ENCODE measurements at regions of chr17 and their contacts with region 1.

Region 1: GRCh38 chr17:15398736-15399331 is 57.4 kb upstream of the TEKT3 start:
- DNase-seq: peak; percentile 5
- H3K4me3 ChIP-seq: no peak overlapping the region
- H3K27ac ChIP-seq: peak overlapping the region; percentile 9
- H3K4me1 ChIP-seq: peaks cover 16% of the 10 kb centered on the region
- H3K27me3 ChIP-seq: no peaks in the 10 kb centered on the region
- CTCF ChIP-seq: no peak
- POLR2A ChIP-seq: no peak

Region 2: GRCh38 chr17:15262291-15263205 is 136.3 kb before region 1 on chr17:
- CTCF ChIA-PET with region 1: no interaction called
- POLR2A ChIA-PET with region 1: no interaction called
- dilution Hi-C with region 1: no loop called
- intact Hi-C with region 1: loop called (anchors 2 kb)
- DNase-seq: peak; percentile 63
- H3K4me3 ChIP-seq: peak overlapping the region; percentile 45 to 82 (median 67)
- H3K27ac ChIP-seq: peak overlapping the region; percentile 50
- H3K4me1 ChIP-seq: peaks cover 21% of the 10 kb centered on the region
- H3K27me3 ChIP-seq: peaks cover 0 to 10% of the 10 kb centered on the region in 2 experiments
- CTCF ChIP-seq: peak in 1 of 2 donors; percentile 5
- POLR2A ChIP-seq: peak; percentile 74

Region 3: GRCh38 chr17:15321556-15322251 is 77.1 kb before region 1 on chr17:
- CTCF ChIA-PET with region 1: no interaction called
- POLR2A ChIA-PET with region 1: no interaction called
- dilution Hi-C with region 1: no loop called
- intact Hi-C with region 1: no loop called
- DNase-seq: no peak
- H3K4me3 ChIP-seq: no peak overlapping the region
- H3K27ac ChIP-seq: no peak overlapping the region
- H3K4me1 ChIP-seq: no peaks in the 10 kb centered on the region
- H3K27me3 ChIP-seq: peaks cover 2 to 9% of the 10 kb centered on the region in 2 experiments
- CTCF ChIP-seq: no peak
- POLR2A ChIP-seq: no peak

Region 4: GRCh38 chr17:15444805-15445204 is 46.0 kb after region 1 on chr17:
- CTCF ChIA-PET with region 1: interaction called, 3 read pairs
- POLR2A ChIA-PET with region 1: interaction called, 3 read pairs
- dilution Hi-C with region 1: no loop called
- intact Hi-C with region 1: loop called (anchors 2 kb)
- DNase-seq: peak; percentile 96
- H3K4me3 ChIP-seq: no peak overlapping the region
- H3K27ac ChIP-seq: peak overlapping the region; percentile 92
- H3K4me1 ChIP-seq: peaks cover 51% of the 10 kb centered on the region
- H3K27me3 ChIP-seq: no peaks in the 10 kb centered on the region
- CTCF ChIP-seq: no peak
- POLR2A ChIP-seq: peak; percentile 74

Measured in endothelial cell of umbilical vein (primary cell).